ENCODE measurements at regions of chr10 and their contacts with region 1.

Region 1: GRCh38 chr10:125084191-125084613 is 76.2 kb downstream of the CTBP2 start:
- DNase-seq: peak; percentile 70 to 80
- ATAC-seq: peak; percentile 80 to 89 (median 85)
- H3K4me3 ChIP-seq: no peak overlapping the region
- H3K27ac ChIP-seq: peak overlapping the region; percentile 95
- H3K4me1 ChIP-seq: peaks cover 80% of the 10 kb centered on the region
- H3K27me3 ChIP-seq: no peaks in the 10 kb centered on the region
- CTCF ChIP-seq: peak; percentile 22

Region 2: GRCh38 chr10:125118011-125118611 is 33.9 kb after region 1 on chr10:
- intact Hi-C with region 1: loop called in 1 of 2 experiments (anchors 5 kb)
- DNase-seq: peak in 1 of 2 donors; percentile 45
- ATAC-seq: peak in 1 of 4 donors; percentile 31
- H3K4me3 ChIP-seq: no peak overlapping the region
- H3K27ac ChIP-seq: peak overlapping the region; percentile 83
- H3K4me1 ChIP-seq: peaks cover 82% of the 10 kb centered on the region
- H3K27me3 ChIP-seq: no peaks in the 10 kb centered on the region
- CTCF ChIP-seq: no peak

Region 3: GRCh38 chr10:125123476-125124114 is 39.4 kb after region 1 on chr10:
- intact Hi-C with region 1: loop called (anchors 2 to 5 kb)
- DNase-seq: peak; percentile 84 to 93
- ATAC-seq: peak; percentile 71 to 85 (median 78)
- H3K4me3 ChIP-seq: peak overlapping the region; percentile 61
- H3K27ac ChIP-seq: peak overlapping the region; percentile 98
- H3K4me1 ChIP-seq: peaks cover 93% of the 10 kb centered on the region
- H3K27me3 ChIP-seq: no peaks in the 10 kb centered on the region
- CTCF ChIP-seq: no peak

Region 4: DNA sequence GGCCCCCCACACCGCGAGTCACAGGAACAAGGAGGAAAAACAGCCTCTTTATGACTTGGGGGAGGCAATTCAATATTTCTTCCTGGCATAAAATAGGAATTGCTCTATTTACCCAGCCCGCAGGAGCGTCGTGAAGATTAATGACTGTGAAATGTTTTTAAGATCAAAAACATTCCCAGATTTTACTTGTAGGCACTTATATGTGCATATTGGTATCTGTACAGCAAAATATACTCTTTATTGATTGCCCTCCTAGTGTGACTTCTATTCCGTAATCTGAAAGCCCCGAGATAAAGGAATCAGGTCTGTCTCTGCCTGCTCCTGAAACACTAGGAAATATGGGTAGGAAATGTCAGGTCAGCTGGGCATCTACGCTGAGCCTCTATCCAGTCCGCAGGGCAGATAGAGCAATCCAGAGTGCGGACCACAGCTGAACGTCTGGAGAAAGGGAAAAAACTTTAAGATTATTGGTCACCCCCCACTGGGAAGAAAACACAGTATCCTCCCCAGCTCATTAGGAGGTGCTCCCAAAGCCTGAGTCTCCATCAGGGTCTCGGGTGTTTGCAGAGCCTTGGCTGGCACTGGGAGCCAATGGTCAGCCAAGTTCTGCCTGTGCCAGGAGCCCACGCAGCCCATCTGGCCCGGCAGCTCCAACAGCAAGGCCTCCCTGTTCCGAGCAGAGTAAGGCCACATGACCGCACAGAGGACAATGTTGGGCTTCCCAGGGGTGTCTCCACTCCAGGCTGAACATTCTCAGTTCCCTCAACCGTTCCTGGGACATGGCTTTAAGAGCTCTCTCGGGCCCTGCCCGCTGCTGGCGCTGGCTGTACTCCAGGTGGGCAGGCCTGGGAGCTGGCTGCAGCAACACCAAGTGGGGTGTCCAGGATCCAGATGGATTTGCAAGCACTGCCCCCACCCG is 68.5 kb after region 1 on chr10:
- intact Hi-C with region 1: loop called in 1 of 2 experiments (anchors 5 kb)
- DNase-seq: peak; percentile 54 to 84
- ATAC-seq: peak; percentile 19 to 61 (median 57)
- H3K4me3 ChIP-seq: peak overlapping the region; percentile 31
- H3K27ac ChIP-seq: peak overlapping the region; percentile 98
- H3K4me1 ChIP-seq: peaks cover 90% of the 10 kb centered on the region
- H3K27me3 ChIP-seq: no peaks in the 10 kb centered on the region
- CTCF ChIP-seq: no peak